Motor neuron (in vitro differentiated cells): ENCODE measurements at regions of chr2 and their contacts with region 1.

Region 1: GRCh38 chr2:161414042-161415033 is 1.8 kb upstream of the TBR1 start:
- ATAC-seq: peak; percentile 76 to 92 (median 82)
- H3K4me3 ChIP-seq: peak overlapping the region; percentile 14 to 41 (median 26)
- H3K27ac ChIP-seq: no peak overlapping the region
- H3K4me1 ChIP-seq: peaks cover 6 to 24% of the 10 kb centered on the region in 2 donors

Region 2: GRCh38 chr2:161238560-161239325 is 175.6 kb before region 1 on chr2:
- in situ Hi-C with region 1: loop called in 1 of 9 experiments (anchors 25 kb)
- ATAC-seq: peak; percentile 70 to 87 (median 80)
- H3K4me3 ChIP-seq: peak overlapping the region; percentile 34 to 58 (median 44)
- H3K27ac ChIP-seq: peak overlapping the region; percentile 17 to 25
- H3K4me1 ChIP-seq: peaks cover 10 to 11% of the 10 kb centered on the region in 2 donors